CD4-positive, alpha-beta memory T cell (primary cell): ENCODE measurements at regions of chr1 and their contacts with region 1.

Region 1: GRCh38 chr1:98749152-98749756 is 87.7 kb downstream of the SNX7 start:
- DNase-seq: peak in 4 of 5 donors; percentile 2 to 25 (median 22)
- H3K4me3 ChIP-seq: no peak overlapping the region
- H3K4me3 Mint-ChIP-seq: no peak overlapping the region
- H3K27ac ChIP-seq: no peak overlapping the region
- H3K27ac Mint-ChIP-seq: no peak overlapping the region
- H3K4me1 ChIP-seq: no peaks in the 10 kb centered on the region
- H3K4me1 Mint-ChIP-seq: no peaks in the 10 kb centered on the region
- H3K27me3 ChIP-seq: no peaks in the 10 kb centered on the region
- H3K27me3 Mint-ChIP-seq: peaks cover 0 to under 1% of the 10 kb centered on the region in 2 donors

Region 2: DNA sequence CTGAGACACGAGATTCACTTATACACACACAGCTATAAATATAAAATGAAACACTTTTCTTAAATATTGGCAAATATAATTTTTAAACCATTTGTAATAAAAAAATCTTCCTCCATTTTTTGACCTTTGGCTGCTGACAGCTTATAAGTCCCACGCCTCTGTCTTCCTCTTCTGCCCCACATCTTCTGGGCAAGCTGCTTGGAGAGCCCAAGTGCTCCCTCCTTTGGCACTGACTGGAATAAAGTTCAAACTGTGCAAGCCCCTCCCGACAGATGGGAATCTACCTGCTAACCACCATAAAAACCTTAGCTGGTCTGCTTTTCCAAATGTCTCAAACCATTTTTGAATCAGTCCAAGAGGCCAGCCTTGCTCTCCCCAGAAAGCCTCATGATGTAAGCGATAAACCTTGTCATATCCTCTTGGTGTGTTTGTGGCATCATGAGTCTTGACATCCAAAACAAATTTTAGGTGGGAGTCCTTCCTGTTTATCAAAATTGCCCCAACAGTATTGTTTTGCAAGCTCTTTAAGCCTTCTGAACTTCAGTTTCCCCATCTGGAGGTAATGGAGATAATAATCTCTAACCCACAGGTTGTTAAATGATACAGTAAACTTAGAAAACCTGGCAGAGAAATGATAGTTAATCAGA is 12.1 kb after region 1 on chr1:
- CTCF ChIA-PET with region 1: interaction called, 10 read pairs
- POLR2A ChIA-PET with region 1: no interaction called
- intact Hi-C with region 1: no loop called
- DNase-seq: no peak
- H3K4me3 ChIP-seq: no peak overlapping the region
- H3K4me3 Mint-ChIP-seq: no peak overlapping the region
- H3K27ac ChIP-seq: no peak overlapping the region
- H3K27ac Mint-ChIP-seq: peak overlapping the region in 1 of 7 donors; percentile 72
- H3K4me1 ChIP-seq: no peaks in the 10 kb centered on the region
- H3K4me1 Mint-ChIP-seq: peaks cover 3 to 8% (median 5%) of the 10 kb centered on the region in 4 donors
- H3K27me3 ChIP-seq: no peaks in the 10 kb centered on the region
- H3K27me3 Mint-ChIP-seq: peaks cover 0 to 3% of the 10 kb centered on the region in 2 donors

Region 3: GRCh38 chr1:98940722-98941079 is 191.4 kb after region 1 on chr1:
- CTCF ChIA-PET with region 1: interaction called, 5 read pairs
- POLR2A ChIA-PET with region 1: no interaction called
- intact Hi-C with region 1: loop called (anchors 1 kb)
- DNase-seq: no peak
- H3K4me3 ChIP-seq: no peak overlapping the region
- H3K4me3 Mint-ChIP-seq: no peak overlapping the region
- H3K27ac ChIP-seq: no peak overlapping the region
- H3K27ac Mint-ChIP-seq: no peak overlapping the region
- H3K4me1 ChIP-seq: no peaks in the 10 kb centered on the region
- H3K4me1 Mint-ChIP-seq: peaks cover 0 to 6% (median 0%) of the 10 kb centered on the region in 4 donors
- H3K27me3 ChIP-seq: no peaks in the 10 kb centered on the region
- H3K27me3 Mint-ChIP-seq: peaks cover 0 to 1% of the 10 kb centered on the region in 2 donors

Region 4: GRCh38 chr1:99180343-99180808 is 431.1 kb after region 1 on chr1:
- CTCF ChIA-PET with region 1: interaction called, 5 read pairs
- POLR2A ChIA-PET with region 1: no interaction called
- intact Hi-C with region 1: loop called (anchors 1 kb)
- DNase-seq: peak; percentile 49 to 63 (median 55)
- H3K4me3 ChIP-seq: no peak overlapping the region
- H3K4me3 Mint-ChIP-seq: no peak overlapping the region
- H3K27ac ChIP-seq: no peak overlapping the region
- H3K27ac Mint-ChIP-seq: no peak overlapping the region
- H3K4me1 ChIP-seq: no peaks in the 10 kb centered on the region
- H3K4me1 Mint-ChIP-seq: no peaks in the 10 kb centered on the region
- H3K27me3 ChIP-seq: no peaks in the 10 kb centered on the region
- H3K27me3 Mint-ChIP-seq: peaks cover 1 to 3% of the 10 kb centered on the region in 2 donors

Region 5: GRCh38 chr1:99481391-99481996 is 732.2 kb after region 1 on chr1:
- CTCF ChIA-PET with region 1: interaction called, 42 read pairs
- POLR2A ChIA-PET with region 1: no interaction called
- intact Hi-C with region 1: no loop called
- DNase-seq: peak; percentile 17 to 53 (median 47)
- H3K4me3 ChIP-seq: no peak overlapping the region
- H3K4me3 Mint-ChIP-seq: no peak overlapping the region
- H3K27ac ChIP-seq: no peak overlapping the region
- H3K27ac Mint-ChIP-seq: no peak overlapping the region
- H3K4me1 ChIP-seq: no peaks in the 10 kb centered on the region
- H3K4me1 Mint-ChIP-seq: no peaks in the 10 kb centered on the region
- H3K27me3 ChIP-seq: no peaks in the 10 kb centered on the region
- H3K27me3 Mint-ChIP-seq: peaks cover 7 to 8% of the 10 kb centered on the region in 2 donors

Region 6: DNA sequence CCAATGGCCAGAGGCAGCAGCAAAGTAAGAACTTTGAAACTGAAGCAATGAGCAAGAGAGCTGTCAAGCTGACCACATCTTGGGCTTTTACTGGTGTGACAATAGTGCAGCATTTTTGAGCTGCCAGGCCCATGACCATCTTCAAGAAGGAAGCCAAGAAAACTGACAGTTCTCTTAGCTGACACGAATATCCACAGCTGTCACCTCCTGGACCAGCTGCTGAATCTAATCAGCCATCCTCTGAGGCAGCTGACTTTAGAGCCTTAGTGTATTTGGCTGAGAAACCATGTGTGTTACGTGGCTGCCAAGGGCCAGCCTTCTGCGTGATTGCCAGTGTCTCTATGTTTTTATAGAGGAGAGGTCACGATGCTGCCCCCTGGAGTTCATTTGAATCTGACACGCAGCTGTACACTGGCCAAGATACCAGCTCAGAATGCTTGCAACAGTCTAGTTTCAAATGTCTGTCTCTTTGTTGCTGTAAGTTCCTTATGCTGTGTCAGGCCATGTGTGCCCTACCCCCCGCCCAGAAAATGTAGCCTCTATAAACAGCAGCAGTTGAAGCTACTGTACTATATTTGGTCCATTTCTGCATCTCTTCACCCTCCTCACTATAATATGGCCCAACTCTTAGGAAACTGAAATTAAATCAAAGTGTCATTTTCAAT is 936.4 kb after region 1 on chr1:
- CTCF ChIA-PET with region 1: interaction called, 3 read pairs
- POLR2A ChIA-PET with region 1: no interaction called
- intact Hi-C with region 1: loop called (anchors 1 kb)
- DNase-seq: peak in 4 of 5 donors; percentile 13 to 21 (median 16)
- H3K4me3 ChIP-seq: no peak overlapping the region
- H3K4me3 Mint-ChIP-seq: no peak overlapping the region
- H3K27ac ChIP-seq: no peak overlapping the region
- H3K27ac Mint-ChIP-seq: no peak overlapping the region
- H3K4me1 ChIP-seq: no peaks in the 10 kb centered on the region
- H3K4me1 Mint-ChIP-seq: peaks cover 0 to 2% (median under 1%) of the 10 kb centered on the region in 4 donors
- H3K27me3 ChIP-seq: no peaks in the 10 kb centered on the region
- H3K27me3 Mint-ChIP-seq: peaks cover 4 to 6% of the 10 kb centered on the region in 2 donors

Region 7: DNA sequence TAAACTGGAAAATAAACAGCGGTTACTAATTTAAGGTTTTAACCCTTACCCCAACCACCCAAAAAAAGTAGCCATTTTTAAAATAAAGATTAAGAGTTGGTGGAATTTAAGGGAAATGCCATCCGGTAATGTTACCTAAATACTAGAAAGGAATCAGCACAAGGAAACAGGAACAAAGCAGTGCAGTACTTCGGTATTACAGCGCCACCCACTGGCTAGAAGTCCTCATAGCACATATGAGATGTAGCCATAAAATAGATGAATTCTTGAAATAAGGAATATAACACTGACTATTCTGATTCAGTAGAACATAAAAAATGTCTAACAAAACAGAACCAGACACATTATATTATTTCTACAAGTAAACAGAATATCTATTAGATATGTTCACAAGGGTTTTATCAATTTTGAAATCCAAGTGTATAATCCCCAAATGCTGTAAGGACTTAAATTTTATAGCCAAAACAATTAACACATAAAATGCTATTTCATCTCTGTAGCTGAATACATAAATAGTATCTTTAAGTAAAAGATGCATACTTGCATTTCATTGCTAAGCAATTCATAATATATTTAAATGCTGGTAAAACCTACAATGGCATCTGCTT is 958.4 kb after region 1 on chr1:
- CTCF ChIA-PET with region 1: interaction called, 19 read pairs
- POLR2A ChIA-PET with region 1: no interaction called
- intact Hi-C with region 1: loop called (anchors 1 kb)
- DNase-seq: peak in 4 of 5 donors; percentile 31 to 43 (median 40)
- H3K4me3 ChIP-seq: no peak overlapping the region
- H3K4me3 Mint-ChIP-seq: no peak overlapping the region
- H3K27ac ChIP-seq: no peak overlapping the region
- H3K27ac Mint-ChIP-seq: no peak overlapping the region
- H3K4me1 ChIP-seq: peaks cover 21% of the 10 kb centered on the region
- H3K4me1 Mint-ChIP-seq: peaks cover 14 to 29% (median 15%) of the 10 kb centered on the region in 4 donors
- H3K27me3 ChIP-seq: no peaks in the 10 kb centered on the region
- H3K27me3 Mint-ChIP-seq: no peaks in the 10 kb centered on the region